Sigmoid colon (tissue), 7 donors: ENCODE measurements at regions of chr5 and their contacts with region 1.

Region 1: GRCh38 chr5:146533260-146533857 is 17.4 kb upstream of the GPR151 start:
- DNase-seq: no peak
- H3K4me3 ChIP-seq: no peak overlapping the region
- H3K27ac ChIP-seq: no peak overlapping the region
- H3K4me1 ChIP-seq: no peaks in the 10 kb centered on the region
- H3K27me3 ChIP-seq: no peaks in the 10 kb centered on the region
- CTCF ChIP-seq: peak; percentile 24 to 75 (median 64)
- EP300 ChIP-seq: no peak
- POLR2A ChIP-seq: no peak

Region 2: DNA sequence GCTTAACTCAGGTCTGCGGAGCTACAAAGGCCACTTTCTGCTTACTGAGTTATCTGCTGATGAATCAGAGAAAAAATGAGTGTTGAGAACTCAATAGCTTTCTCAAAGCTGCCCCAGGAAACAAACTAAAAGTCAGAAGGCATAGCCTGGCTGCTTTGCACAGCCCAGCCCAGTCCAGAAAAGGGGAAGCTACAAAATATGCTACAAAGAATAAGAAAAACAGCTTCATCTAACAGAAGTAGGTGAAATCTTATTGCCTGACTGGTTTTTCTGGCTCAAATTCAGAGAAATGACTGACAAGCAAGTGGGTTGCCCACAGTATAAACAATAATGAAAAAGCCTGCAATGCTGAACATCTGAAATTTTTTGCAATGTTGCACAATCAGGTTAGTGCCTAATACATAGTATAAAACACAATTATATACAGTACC is 189.0 kb after region 1 on chr5:
- intact Hi-C with region 1: no loop called
- DNase-seq: no peak
- H3K4me3 ChIP-seq: no peak overlapping the region
- H3K27ac ChIP-seq: no peak overlapping the region
- H3K4me1 ChIP-seq: peaks cover 0 to 5% (median 0%) of the 10 kb centered on the region in 4 donors
- H3K27me3 ChIP-seq: no peaks in the 10 kb centered on the region
- CTCF ChIP-seq: no peak
- EP300 ChIP-seq: no peak
- POLR2A ChIP-seq: no peak

Region 3: GRCh38 chr5:147188200-147189108 is 655.1 kb after region 1 on chr5:
- intact Hi-C with region 1: loop called (anchors 1 kb)
- DNase-seq: no peak
- H3K4me3 ChIP-seq: peak overlapping the region in 2 of 4 donors; percentile 11 to 15
- H3K27ac ChIP-seq: no peak overlapping the region
- H3K4me1 ChIP-seq: peaks cover 0 to 4% (median 1%) of the 10 kb centered on the region in 4 donors
- H3K27me3 ChIP-seq: no peaks in the 10 kb centered on the region
- CTCF ChIP-seq: peak; percentile 61 to 86 (median 74)
- EP300 ChIP-seq: no peak
- POLR2A ChIP-seq: no peak